ENCODE measurements at regions of chr4 and their contacts with region 1.

Region 1: DNA sequence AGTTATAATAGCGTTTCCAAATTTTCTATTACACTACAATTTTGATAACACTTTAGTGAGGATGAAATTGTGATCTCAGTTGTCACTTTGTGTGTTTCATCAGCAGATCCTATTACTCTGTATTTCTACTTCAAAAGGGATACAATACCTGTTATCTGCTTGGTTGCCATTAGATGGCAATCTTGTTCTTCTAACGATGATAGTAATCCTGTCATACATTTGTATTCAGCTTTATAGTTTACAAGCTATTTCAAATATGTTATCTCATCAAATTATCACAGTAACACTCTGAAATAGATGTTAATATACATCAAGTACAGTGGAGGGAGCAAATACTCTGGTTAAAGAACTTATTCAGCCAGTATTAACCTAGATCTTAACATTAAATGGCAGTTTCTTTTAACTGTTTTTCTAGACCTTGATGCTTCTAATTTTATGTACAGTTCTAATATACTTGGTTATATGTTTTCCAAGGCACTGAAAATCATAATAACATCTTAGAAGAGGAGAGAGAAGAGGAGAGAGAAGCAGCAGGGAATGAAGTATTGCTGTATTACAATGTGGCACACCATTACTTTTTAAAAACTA is 292.0 kb downstream of the CCSER1 start:
- DNase-seq: peak; percentile 38
- H3K4me3 ChIP-seq: no peak overlapping the region
- H3K27ac ChIP-seq: no peak overlapping the region
- H3K4me1 ChIP-seq: no peaks in the 10 kb centered on the region
- H3K27me3 ChIP-seq: no peaks in the 10 kb centered on the region
- CTCF ChIP-seq: peak; percentile 69 to 76

Region 2: DNA sequence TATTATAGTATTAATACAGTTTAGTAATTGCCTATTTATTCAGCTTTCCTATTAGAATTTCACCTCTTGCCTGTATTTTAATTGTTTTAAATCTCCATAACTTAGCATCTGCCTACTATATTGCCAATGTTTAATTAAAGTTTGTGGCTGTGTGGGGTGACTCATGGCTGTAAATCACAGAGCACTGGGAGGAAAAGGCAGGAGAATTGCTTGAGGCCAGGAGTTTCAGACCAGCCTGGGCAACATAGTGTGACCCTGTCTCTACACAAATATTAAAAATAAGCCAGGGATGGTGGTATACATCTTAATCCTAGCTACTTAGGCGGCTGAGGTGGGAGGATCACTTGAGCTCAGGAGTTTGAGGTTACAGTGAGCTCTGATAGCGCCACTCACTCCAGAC is 306.5 kb before region 1 on chr4:
- CTCF ChIA-PET with region 1: no interaction called
- dilution Hi-C with region 1: no loop called
- in situ Hi-C with region 1: no loop called
- intact Hi-C with region 1: no loop called
- DNase-seq: peak; percentile 64
- H3K4me3 ChIP-seq: no peak overlapping the region
- H3K27ac ChIP-seq: no peak overlapping the region
- H3K4me1 ChIP-seq: no peaks in the 10 kb centered on the region
- H3K27me3 ChIP-seq: no peaks in the 10 kb centered on the region
- CTCF ChIP-seq: no peak

Region 3: GRCh38 chr4:90317785-90318184 is 101.4 kb before region 1 on chr4:
- CTCF ChIA-PET with region 1: no interaction called
- dilution Hi-C with region 1: no loop called
- in situ Hi-C with region 1: no loop called
- intact Hi-C with region 1: loop called (anchors 5 kb)
- DNase-seq: peak; percentile 84
- H3K4me3 ChIP-seq: no peak overlapping the region
- H3K27ac ChIP-seq: peak overlapping the region; percentile 81
- H3K4me1 ChIP-seq: peaks cover 11% of the 10 kb centered on the region
- H3K27me3 ChIP-seq: no peaks in the 10 kb centered on the region
- CTCF ChIP-seq: no peak

Region 4: GRCh38 chr4:90943311-90943710 is 524.1 kb after region 1 on chr4:
- CTCF ChIA-PET with region 1: no interaction called
- dilution Hi-C with region 1: no loop called
- in situ Hi-C with region 1: no loop called
- intact Hi-C with region 1: loop called (anchors 10 kb)
- DNase-seq: peak; percentile 40
- H3K4me3 ChIP-seq: no peak overlapping the region
- H3K27ac ChIP-seq: no peak overlapping the region
- H3K4me1 ChIP-seq: no peaks in the 10 kb centered on the region
- H3K27me3 ChIP-seq: peaks cover 3% of the 10 kb centered on the region
- CTCF ChIP-seq: no peak

Region 5: DNA sequence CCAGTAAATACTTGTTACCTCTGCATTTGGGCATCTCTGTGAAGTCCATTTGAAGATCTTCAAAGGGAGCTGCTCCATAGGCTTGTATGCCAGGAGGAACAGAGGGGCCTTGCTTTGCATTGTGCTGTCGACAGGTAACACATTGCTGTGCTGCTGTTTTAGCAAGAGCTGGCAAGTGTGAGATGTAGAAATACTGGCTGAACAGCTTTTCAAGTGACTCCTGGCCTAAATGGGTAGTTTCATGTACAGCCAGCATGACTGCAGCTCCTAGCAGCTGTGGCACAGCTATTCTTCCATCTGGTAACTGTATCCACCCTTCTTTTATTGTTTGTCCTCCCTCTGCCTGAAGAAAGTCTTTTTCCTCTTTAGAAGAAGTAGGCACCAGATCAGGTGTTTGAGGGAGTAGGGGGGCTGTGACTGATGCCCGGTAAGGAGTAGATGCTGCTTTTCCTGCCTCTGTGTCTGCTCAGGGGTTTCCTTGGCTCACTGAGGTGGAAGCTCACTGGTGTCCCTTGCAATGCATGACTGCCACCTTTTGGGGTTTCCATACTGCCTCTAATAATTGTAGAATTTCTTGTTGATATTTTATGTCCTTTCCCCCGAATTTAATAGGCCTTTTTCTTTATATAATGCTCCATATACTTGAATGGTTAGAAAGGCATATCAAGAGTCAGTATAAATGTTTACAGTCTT is 673.3 kb after region 1 on chr4:
- CTCF ChIA-PET with region 1: interaction called, 10 read pairs
- dilution Hi-C with region 1: no loop called
- in situ Hi-C with region 1: no loop called
- intact Hi-C with region 1: loop called (anchors 2 kb)
- DNase-seq: peak; percentile 20
- H3K4me3 ChIP-seq: no peak overlapping the region
- H3K27ac ChIP-seq: no peak overlapping the region
- H3K4me1 ChIP-seq: no peaks in the 10 kb centered on the region
- H3K27me3 ChIP-seq: no peaks in the 10 kb centered on the region
- CTCF ChIP-seq: peak in 1 of 2 donors; percentile 39

Region 6: GRCh38 chr4:91113130-91113706 is 694.0 kb after region 1 on chr4:
- CTCF ChIA-PET with region 1: interaction called, 4 read pairs
- dilution Hi-C with region 1: no loop called
- in situ Hi-C with region 1: loop called (anchors 25 kb)
- intact Hi-C with region 1: loop called (anchors 1 kb)
- DNase-seq: peak; percentile 5
- H3K4me3 ChIP-seq: no peak overlapping the region
- H3K27ac ChIP-seq: no peak overlapping the region
- H3K4me1 ChIP-seq: no peaks in the 10 kb centered on the region
- H3K27me3 ChIP-seq: no peaks in the 10 kb centered on the region
- CTCF ChIP-seq: peak; percentile 49 to 60

Region 7: GRCh38 chr4:91502365-91502764 is 1083.1 kb after region 1 on chr4:
- CTCF ChIA-PET with region 1: no interaction called
- dilution Hi-C with region 1: no loop called
- in situ Hi-C with region 1: no loop called
- intact Hi-C with region 1: loop called (anchors 5 kb)
- DNase-seq: no peak
- H3K4me3 ChIP-seq: no peak overlapping the region
- H3K27ac ChIP-seq: no peak overlapping the region
- H3K4me1 ChIP-seq: no peaks in the 10 kb centered on the region
- H3K27me3 ChIP-seq: no peaks in the 10 kb centered on the region
- CTCF ChIP-seq: peak; percentile 10 to 38

Region 8: DNA sequence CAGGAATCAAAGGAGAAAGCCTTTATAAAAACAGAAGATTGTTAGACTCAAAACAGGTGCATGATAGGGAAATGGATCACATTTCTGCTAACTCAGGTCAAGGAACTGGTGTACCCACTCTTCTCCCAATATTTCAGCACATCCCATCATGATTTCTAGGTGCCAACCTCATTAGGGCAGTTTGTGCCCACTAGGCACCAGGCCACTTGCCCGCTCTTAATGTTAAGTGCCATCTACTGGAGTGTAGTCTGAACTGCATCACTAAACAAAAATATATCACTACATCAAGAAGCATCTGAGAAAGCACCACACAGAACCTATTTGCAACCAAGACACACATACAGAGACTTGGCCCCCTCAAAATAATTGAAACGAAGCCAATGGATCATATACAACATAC is 1744.1 kb after region 1 on chr4:
- CTCF ChIA-PET with region 1: no interaction called
- dilution Hi-C with region 1: no loop called
- in situ Hi-C with region 1: no loop called
- intact Hi-C with region 1: loop called (anchors 10 kb)
- DNase-seq: peak; percentile 2
- H3K4me3 ChIP-seq: no peak overlapping the region
- H3K27ac ChIP-seq: no peak overlapping the region
- H3K4me1 ChIP-seq: no peaks in the 10 kb centered on the region
- H3K27me3 ChIP-seq: no peaks in the 10 kb centered on the region
- CTCF ChIP-seq: peak; percentile 47 to 64